Motor neuron (in vitro differentiated cells): ENCODE measurements at regions of chrX and their contacts with region 1.

Region 1: GRCh38 chrX:65985922-65986588 is 53.8 kb downstream of the VSIG4 start:
- ATAC-seq: peak; percentile 17 to 93 (median 65)
- H3K4me3 ChIP-seq: no peak overlapping the region
- H3K27ac ChIP-seq: no peak overlapping the region
- H3K4me1 ChIP-seq: no peaks in the 10 kb centered on the region

Region 2: GRCh38 chrX:65508851-65509250 is 477.2 kb before region 1 on chrX:
- in situ Hi-C with region 1: no loop called
- ATAC-seq: no peak
- H3K4me3 ChIP-seq: no peak overlapping the region
- H3K27ac ChIP-seq: no peak overlapping the region
- H3K4me1 ChIP-seq: no peaks in the 10 kb centered on the region

Region 3: GRCh38 chrX:65595460-65595876 is 390.6 kb before region 1 on chrX:
- in situ Hi-C with region 1: loop called in 3 of 9 experiments (anchors 25 kb)
- ATAC-seq: peak; percentile 77 to 95 (median 86)
- H3K4me3 ChIP-seq: no peak overlapping the region
- H3K27ac ChIP-seq: no peak overlapping the region
- H3K4me1 ChIP-seq: peaks cover 0 to 10% of the 10 kb centered on the region in 2 donors

Region 4: DNA sequence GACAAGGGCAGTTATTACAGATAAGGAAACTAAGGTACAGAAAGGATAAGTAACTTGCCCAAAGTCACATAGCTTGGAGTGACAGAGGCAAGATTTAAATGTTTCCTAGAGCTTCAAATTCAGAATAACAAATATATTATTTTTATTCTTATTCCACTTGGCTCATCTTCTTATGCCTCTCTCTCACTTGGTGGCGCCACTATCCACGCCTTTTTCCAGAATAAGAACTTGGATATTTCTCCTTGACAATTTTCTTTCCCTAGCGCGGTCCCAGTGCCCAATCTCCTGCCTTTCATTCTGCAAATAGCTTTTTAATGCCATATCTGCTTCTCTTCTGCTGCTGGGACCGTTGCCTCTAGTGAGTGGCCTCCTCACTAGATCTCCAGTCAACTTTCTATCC is 240.1 kb before region 1 on chrX:
- in situ Hi-C with region 1: loop called in 1 of 9 experiments (anchors 25 kb)
- ATAC-seq: peak in 1 of 8 experiments; percentile 34
- H3K4me3 ChIP-seq: no peak overlapping the region
- H3K27ac ChIP-seq: no peak overlapping the region
- H3K4me1 ChIP-seq: no peaks in the 10 kb centered on the region

Region 5: DNA sequence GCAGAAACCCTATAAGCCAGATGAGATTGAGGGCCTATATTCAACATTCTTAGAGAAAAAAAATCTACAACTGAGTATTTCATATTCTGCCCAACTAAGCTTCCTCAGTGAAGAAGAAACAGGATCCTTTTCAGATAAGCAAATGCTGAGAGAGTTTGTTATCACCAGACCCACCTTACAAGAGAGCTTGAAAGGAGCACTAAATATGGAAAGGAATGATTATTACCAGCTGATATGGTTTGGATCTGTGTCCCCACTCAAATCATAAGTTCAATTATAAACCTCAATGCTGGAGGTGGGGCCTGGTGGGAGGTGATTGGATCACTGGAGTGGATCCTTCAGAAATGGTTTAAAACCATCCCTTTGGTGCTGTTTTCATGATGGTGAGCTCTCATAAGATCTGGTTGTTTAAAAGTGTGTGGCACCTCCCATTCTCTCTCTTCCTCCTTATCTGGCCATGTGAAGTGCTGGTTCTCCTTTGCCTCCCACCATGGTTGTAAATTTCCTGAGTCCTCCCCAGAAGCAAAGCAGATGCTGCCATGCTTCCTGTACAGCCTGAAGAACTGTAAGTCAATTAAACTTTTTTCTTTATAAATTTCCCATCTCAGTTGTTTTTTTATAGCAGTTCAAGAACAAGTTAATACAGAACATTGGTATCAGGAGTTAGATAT is 174.4 kb before region 1 on chrX:
- in situ Hi-C with region 1: no loop called
- ATAC-seq: no peak
- H3K4me3 ChIP-seq: no peak overlapping the region
- H3K27ac ChIP-seq: no peak overlapping the region
- H3K4me1 ChIP-seq: no peaks in the 10 kb centered on the region